GM10248 (cell line): ENCODE measurements at regions of chr20 and their contacts with region 1.

Region 1: DNA sequence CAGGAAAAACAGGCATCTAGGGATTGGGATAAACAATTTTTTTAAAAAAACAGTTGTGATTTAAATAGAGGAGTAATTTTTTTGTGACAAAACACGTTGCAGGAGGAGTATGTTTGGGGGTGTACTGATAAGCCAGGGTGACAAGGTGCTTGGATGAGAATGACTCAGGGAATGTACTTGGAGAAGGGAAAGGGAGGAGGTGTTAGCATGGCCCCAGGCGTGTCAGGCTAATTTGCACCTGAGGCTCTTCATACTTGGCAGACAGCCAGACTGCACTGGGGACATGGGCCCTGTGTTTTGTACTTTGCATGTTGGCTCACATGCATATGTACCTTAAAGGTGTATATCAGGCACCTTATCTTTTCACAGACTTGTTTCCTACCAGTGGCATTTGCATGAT is 22.8 kb downstream of the PANK2 start:
- DNase-seq: no peak
- CTCF ChIP-seq: no peak

Region 2: GRCh38 chr20:3888622-3889488 is 23.1 kb before region 1 on chr20 and contains the start of gene PANK2:
- CTCF ChIA-PET with region 1: no interaction called
- POLR2A ChIA-PET with region 1: interaction called, 17 read pairs
- DNase-seq: peak; percentile 99
- CTCF ChIP-seq: peak; percentile 34

Region 3: DNA sequence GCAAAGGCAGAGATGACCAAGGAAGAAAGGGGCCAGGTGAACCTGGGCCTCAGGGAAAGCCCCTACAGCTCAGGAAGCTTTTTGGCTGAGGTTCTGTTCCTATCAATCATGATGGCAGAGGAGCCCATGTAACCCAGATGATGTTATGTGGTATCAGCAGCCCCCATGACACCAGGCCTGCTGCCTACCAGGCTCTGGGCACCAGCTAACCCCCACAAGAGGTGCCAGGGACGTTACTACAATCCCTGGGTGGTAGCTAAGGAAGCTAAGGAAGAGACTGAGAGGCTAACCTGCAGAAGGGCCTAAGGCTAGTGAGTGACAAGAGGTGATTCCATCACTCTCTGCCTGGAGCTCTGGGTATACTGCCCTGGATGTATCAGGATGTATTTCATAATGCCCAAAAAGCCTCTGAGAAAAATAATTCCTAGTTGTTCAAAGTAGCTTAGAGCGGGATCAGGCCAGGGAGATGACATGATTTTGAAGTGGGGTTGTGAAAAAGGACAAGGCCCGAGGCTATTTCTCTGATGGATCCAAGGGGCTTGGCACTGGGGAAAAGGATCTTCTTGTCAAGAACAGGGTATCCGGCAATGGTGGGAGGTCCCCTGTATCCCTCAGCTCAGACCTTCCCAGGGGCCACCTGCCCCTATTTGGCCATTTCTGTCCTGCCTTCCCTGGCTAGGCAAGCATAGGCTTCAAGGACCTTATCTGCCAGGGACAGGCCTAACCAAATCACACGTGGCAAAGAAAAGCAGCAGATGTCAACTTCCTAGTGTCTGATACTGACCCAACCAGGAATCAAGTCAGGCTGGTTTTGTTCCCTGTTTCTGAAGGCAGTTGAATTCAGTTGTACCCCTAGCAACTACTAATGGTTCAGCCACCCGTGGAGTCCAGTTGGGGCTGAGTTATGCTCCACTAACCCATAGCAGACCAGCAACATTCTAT is 18.6 kb after region 1 on chr20:
- CTCF ChIA-PET with region 1: interaction called, 10 read pairs
- POLR2A ChIA-PET with region 1: interaction called, 4 read pairs
- DNase-seq: no peak
- CTCF ChIP-seq: no peak